ENCODE measurements at regions of chr17 and their contacts with region 1.

Region 1: GRCh38 chr17:48878918-48879898 is 13.4 kb upstream of the ATP5MC1 start:
- DNase-seq: peak; percentile 82
- H3K4me3 ChIP-seq: no peak overlapping the region
- H3K27ac ChIP-seq: no peak overlapping the region
- H3K4me1 ChIP-seq: no peaks in the 10 kb centered on the region
- H3K27me3 ChIP-seq: no peaks in the 10 kb centered on the region
- CTCF ChIP-seq: peak; percentile 95

Region 2: GRCh38 chr17:48663134-48663924 is 215.9 kb before region 1 on chr17:
- CTCF ChIA-PET with region 1: interaction called, 10 read pairs
- POLR2A ChIA-PET with region 1: no interaction called
- intact Hi-C with region 1: no loop called
- DNase-seq: peak; percentile 44
- H3K4me3 ChIP-seq: no peak overlapping the region
- H3K27ac ChIP-seq: no peak overlapping the region
- H3K4me1 ChIP-seq: no peaks in the 10 kb centered on the region
- H3K27me3 ChIP-seq: no peaks in the 10 kb centered on the region
- CTCF ChIP-seq: peak; percentile 60

Region 3: DNA sequence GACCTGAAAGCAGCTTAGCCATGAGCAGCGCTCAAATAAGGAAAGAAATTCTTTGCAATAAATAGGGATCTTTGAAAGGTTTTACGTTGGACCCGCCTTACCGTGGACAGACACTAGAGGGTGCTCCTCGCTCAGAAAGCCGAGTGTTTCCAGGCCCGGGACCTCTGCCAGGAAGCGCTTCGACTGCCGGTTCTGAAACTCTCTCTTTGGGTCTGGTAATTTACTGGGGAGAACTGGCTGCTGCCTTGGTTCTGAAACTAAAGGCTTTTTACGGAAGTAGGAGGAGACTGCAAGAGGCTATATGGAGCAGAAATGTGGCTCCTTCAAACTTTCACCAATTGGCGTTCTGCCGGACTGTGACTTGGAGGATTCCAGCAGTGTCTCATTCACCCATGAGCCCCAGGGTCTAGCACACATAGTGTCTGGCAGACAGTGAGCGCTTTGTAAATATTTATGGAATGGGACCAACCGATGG is 207.5 kb before region 1 on chr17:
- CTCF ChIA-PET with region 1: interaction called, 39 read pairs
- POLR2A ChIA-PET with region 1: no interaction called
- intact Hi-C with region 1: no loop called
- DNase-seq: peak; percentile 90
- H3K4me3 ChIP-seq: peak overlapping the region; percentile 42
- H3K27ac ChIP-seq: peak overlapping the region; percentile 52
- H3K4me1 ChIP-seq: peaks cover 6% of the 10 kb centered on the region
- H3K27me3 ChIP-seq: no peaks in the 10 kb centered on the region
- CTCF ChIP-seq: peak; percentile 92

Region 4: GRCh38 chr17:48804925-48805411 is 74.2 kb before region 1 on chr17:
- CTCF ChIA-PET with region 1: interaction called, 57 read pairs
- POLR2A ChIA-PET with region 1: no interaction called
- intact Hi-C with region 1: loop called (anchors 2 kb)
- DNase-seq: peak; percentile 87
- H3K4me3 ChIP-seq: peak overlapping the region; percentile 24
- H3K27ac ChIP-seq: peak overlapping the region; percentile 89
- H3K4me1 ChIP-seq: peaks cover 50% of the 10 kb centered on the region
- H3K27me3 ChIP-seq: no peaks in the 10 kb centered on the region
- CTCF ChIP-seq: peak; percentile 96

Region 5: DNA sequence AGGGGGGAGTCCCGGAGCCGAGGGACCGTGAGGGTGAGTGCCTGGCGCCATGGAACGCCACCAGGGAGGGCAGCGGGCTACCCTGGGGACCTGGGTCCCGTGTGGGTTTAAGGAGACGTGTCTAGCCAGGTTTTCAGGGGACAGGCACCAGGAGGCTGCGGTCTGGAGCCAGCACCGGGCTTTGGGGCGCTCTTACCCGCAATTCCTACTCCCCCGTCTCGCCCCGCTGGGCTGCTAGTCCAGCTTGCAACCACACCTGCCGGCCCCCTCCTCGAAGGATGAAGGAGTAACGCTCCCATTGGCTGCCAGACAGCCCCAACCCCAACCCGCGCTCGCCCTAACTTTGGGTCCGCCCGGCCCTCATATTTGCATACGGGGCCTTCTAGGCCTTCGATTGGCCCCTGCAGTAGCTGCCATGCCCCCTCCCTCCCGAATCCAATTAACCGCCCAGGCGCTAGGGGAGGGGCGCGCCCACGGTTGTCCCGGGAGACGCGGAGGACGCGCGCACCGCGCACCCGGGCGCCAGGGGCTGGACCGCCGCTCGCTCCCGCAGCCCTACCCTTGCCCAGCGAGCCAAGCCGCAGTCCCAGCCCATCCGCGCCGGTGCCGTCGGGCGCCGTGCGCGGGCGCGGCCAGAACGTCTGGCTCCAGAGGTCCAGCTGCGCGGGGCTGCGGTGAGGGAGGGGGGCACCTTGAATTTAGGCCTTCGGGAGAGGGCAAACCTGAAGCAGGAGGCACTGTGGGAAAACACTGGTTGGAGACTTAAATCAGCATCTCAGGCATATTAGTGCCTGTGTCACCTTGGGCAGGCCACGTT is 62.2 kb before region 1 on chr17 and contains the start of gene TTLL6:
- CTCF ChIA-PET with region 1: interaction called, 82 read pairs
- POLR2A ChIA-PET with region 1: no interaction called
- intact Hi-C with region 1: loop called (anchors 1 kb)
- DNase-seq: peak; percentile 97
- H3K4me3 ChIP-seq: peak within 1 kb of the TSS; percentile 48
- H3K27ac ChIP-seq: no peak within 1 kb of the TSS
- H3K4me1 ChIP-seq: peaks cover 13% of the 10 kb centered on the region
- H3K27me3 ChIP-seq: no peaks in the 10 kb centered on the region
- CTCF ChIP-seq: no peak
- total RNA-seq, gene TTLL6: 2.1 and 2.3 TPM in 2 replicates

Region 6: DNA sequence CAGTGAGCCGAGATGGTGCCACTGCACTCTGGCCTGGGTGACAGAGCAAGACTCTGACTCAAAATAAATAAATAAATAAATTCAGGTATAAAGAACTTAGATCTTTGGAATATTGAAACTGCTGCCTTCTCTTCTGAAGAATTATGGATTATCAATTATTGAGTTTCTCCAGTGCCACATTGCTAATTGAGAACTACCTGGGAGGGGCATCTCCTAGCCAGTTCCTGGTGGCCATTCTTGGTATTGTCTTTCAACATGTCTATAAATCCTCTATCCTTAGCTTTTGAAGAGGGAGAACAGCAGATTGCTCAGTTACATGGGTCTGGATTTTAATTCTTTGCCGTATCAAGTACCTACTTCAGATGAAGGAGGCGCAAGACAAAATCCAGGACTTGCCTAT is 19.2 kb before region 1 on chr17:
- CTCF ChIA-PET with region 1: interaction called, 10 read pairs
- POLR2A ChIA-PET with region 1: no interaction called
- intact Hi-C with region 1: no loop called
- DNase-seq: no peak
- H3K4me3 ChIP-seq: no peak overlapping the region
- H3K27ac ChIP-seq: no peak overlapping the region
- H3K4me1 ChIP-seq: no peaks in the 10 kb centered on the region
- H3K27me3 ChIP-seq: no peaks in the 10 kb centered on the region
- CTCF ChIP-seq: peak; percentile 31

Region 7: DNA sequence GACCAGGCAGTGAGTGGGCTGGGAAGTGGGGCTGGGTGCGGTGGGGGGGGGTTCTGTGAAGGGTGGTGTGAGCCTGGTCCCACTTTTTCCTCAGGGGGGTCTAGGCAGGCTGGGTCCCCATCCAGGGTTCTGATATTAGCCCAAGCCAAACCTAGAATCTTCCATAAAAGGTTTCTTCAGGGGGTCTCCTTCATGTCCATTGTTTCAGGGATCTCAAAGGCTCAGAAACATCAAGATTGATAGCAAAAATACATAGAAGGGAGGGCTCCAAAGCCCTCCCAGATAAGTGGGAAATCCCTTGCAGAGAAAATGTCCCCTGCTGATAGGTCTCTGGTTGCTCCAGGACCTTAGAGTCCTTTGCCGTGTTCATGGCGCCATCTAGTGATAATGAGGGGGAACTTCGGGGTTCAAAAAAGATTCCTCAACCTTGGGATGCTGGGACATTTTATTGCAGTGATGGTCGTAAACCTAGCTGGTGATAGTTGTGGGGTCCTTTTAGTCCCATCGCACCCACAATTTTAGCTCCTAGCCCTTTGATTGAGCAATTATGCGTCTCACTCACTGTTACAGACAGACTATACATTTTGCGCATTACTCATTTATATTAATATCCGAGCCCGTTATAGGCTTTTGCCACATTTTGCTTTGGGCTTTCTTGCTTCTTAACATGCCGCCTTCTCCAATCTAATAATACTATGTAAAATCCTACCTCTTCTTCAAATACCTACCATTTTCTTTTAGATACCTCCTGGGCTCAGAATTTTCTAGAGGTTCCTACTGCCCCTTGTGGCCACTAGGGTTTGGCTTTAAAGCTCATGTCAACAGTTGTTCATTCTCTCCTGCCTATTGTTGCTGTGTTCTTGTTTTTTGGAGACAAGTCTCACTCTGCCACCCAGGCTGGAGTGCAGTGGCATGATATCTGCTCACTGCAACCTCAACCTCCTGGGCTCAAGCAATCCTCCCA is 153.0 kb after region 1 on chr17:
- CTCF ChIA-PET with region 1: interaction called, 8 read pairs
- POLR2A ChIA-PET with region 1: no interaction called
- intact Hi-C with region 1: loop called (anchors 2 kb)
- DNase-seq: peak; percentile 96
- H3K4me3 ChIP-seq: no peak overlapping the region
- H3K27ac ChIP-seq: peak overlapping the region; percentile 76
- H3K4me1 ChIP-seq: peaks cover 61% of the 10 kb centered on the region
- H3K27me3 ChIP-seq: no peaks in the 10 kb centered on the region
- CTCF ChIP-seq: peak; percentile 76

Region 8: DNA sequence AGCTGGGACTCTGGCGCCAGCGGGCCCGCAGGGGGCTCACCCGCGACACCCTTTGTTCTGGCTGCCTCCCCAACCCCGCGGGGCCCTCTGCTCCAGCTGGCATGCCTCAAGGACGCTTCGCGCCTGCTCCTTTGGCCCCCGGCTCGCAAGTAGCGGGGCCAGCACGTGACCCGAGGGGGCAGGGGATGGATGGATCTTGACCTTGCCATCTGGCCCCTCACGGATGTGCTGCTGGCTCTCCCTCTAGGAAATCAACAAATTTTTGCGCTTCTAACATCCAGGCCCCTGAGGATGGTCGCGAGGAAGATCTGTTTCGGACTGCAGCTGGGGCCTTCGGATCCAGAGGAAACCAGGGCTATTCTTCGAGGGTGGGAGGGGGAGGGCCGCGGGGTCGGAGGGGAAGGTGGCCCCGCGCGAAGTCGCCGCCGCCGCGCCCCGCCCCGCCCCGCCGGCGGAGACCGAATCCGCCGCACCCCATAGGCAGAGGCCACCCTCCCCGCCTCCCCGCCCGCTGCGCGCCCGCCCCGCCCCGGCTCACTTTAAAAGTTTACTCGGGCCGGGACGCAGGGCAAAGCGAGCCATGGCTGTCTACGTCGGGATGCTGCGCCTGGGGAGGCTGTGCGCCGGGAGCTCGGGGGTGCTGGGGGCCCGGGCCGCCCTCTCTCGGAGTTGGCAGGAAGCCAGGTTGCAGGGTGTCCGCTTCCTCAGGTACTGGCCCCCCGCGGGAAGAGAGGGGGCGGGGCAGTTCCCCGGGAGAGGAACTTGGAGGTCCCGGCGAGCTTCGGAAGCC is 1546.7 kb after region 1 on chr17 and contains the start of gene ACSF2:
- CTCF ChIA-PET with region 1: no interaction called
- POLR2A ChIA-PET with region 1: no interaction called
- intact Hi-C with region 1: no loop called
- DNase-seq: peak; percentile 71
- H3K4me3 ChIP-seq: peak within 1 kb of the TSS; percentile 57
- H3K27ac ChIP-seq: no peak within 1 kb of the TSS
- H3K4me1 ChIP-seq: peaks cover 37% of the 10 kb centered on the region
- H3K27me3 ChIP-seq: no peaks in the 10 kb centered on the region
- CTCF ChIP-seq: no peak
- total RNA-seq, gene ACSF2: 4.1 and 9.2 TPM in 2 replicates